ENCODE measurements at regions of chr21 and their contacts with region 1.

Region 1: GRCh38 chr21:31604591-31605190 is 54.8 kb upstream of the SOD1 start:
- DNase-seq: peak; percentile 52 to 63 (median 61)
- H3K4me3 ChIP-seq: no peak overlapping the region
- H3K4me3 Mint-ChIP-seq: peak overlapping the region in 1 of 8 donors; percentile 23
- H3K27ac ChIP-seq: no peak overlapping the region
- H3K27ac Mint-ChIP-seq: peak overlapping the region in 1 of 7 donors; percentile 43
- H3K4me1 ChIP-seq: no peaks in the 10 kb centered on the region
- H3K4me1 Mint-ChIP-seq: peaks cover 0 to 5% (median under 1%) of the 10 kb centered on the region in 4 donors
- H3K27me3 ChIP-seq: no peaks in the 10 kb centered on the region
- H3K27me3 Mint-ChIP-seq: peaks cover 3 to 6% of the 10 kb centered on the region in 2 donors

Region 2: DNA sequence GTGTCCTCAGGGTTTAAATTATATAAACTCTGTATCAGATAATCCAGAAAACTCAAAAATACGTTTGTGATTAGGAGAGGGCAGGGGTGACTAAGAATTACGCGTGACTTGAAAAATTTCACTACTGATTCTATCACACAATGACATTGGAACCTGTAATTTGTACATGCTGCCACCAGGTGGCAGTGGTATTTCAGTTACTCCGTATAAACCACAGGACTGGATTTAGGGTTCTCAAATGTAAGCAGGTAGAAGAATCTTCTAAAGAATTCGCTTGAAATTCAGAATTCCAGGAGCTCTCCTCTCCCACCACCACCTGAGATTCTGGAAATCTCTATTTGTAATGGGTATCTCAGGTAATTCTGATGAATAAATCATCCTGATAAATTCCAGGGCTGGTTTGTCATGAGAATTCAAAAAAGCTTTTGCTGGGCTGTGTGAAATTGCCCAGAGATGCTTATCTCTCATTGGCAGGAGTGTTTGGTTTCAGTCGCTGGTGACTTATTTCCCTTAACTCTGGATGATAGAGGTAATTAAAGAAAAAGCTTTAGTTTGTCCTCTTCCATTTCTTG is 773.4 kb before region 1 on chr21:
- CTCF ChIA-PET with region 1: no interaction called
- POLR2A ChIA-PET with region 1: no interaction called
- intact Hi-C with region 1: loop called (anchors 10 kb)
- DNase-seq: peak in 4 of 5 donors; percentile 19 to 36 (median 26)
- H3K4me3 ChIP-seq: no peak overlapping the region
- H3K4me3 Mint-ChIP-seq: no peak overlapping the region
- H3K27ac ChIP-seq: no peak overlapping the region
- H3K27ac Mint-ChIP-seq: no peak overlapping the region
- H3K4me1 ChIP-seq: no peaks in the 10 kb centered on the region
- H3K4me1 Mint-ChIP-seq: no peaks in the 10 kb centered on the region
- H3K27me3 ChIP-seq: no peaks in the 10 kb centered on the region
- H3K27me3 Mint-ChIP-seq: peaks cover 10 to 13% of the 10 kb centered on the region in 2 donors

Region 3: DNA sequence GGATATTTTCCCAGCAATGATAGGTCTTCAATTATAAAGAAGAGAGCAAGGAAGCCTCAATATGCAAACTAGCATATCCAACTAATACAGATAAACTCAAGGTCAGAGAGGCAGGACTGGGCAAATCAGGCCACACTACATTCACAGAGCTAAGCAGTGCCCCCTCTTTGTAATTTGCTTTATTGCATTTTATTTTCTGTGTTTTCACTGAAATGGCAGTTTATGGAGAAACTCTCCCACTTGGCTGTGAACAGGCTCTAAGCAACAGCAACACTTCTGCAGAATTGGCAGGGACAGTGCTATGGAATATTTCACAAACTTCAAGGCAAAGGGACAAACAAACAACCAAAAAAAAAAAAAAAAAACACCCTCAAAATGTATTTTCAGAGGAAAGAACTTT is 38.6 kb before region 1 on chr21:
- CTCF ChIA-PET with region 1: no interaction called
- POLR2A ChIA-PET with region 1: no interaction called
- intact Hi-C with region 1: no loop called
- DNase-seq: no peak
- H3K4me3 ChIP-seq: no peak overlapping the region
- H3K4me3 Mint-ChIP-seq: no peak overlapping the region
- H3K27ac ChIP-seq: no peak overlapping the region
- H3K27ac Mint-ChIP-seq: no peak overlapping the region
- H3K4me1 ChIP-seq: no peaks in the 10 kb centered on the region
- H3K4me1 Mint-ChIP-seq: no peaks in the 10 kb centered on the region
- H3K27me3 ChIP-seq: no peaks in the 10 kb centered on the region
- H3K27me3 Mint-ChIP-seq: peaks cover 0 to 2% of the 10 kb centered on the region in 2 donors

Measured in CD4-positive, alpha-beta memory T cell (primary cell).